ENCODE measurements at regions of chr1 and their contacts with region 1.

Region 1: DNA sequence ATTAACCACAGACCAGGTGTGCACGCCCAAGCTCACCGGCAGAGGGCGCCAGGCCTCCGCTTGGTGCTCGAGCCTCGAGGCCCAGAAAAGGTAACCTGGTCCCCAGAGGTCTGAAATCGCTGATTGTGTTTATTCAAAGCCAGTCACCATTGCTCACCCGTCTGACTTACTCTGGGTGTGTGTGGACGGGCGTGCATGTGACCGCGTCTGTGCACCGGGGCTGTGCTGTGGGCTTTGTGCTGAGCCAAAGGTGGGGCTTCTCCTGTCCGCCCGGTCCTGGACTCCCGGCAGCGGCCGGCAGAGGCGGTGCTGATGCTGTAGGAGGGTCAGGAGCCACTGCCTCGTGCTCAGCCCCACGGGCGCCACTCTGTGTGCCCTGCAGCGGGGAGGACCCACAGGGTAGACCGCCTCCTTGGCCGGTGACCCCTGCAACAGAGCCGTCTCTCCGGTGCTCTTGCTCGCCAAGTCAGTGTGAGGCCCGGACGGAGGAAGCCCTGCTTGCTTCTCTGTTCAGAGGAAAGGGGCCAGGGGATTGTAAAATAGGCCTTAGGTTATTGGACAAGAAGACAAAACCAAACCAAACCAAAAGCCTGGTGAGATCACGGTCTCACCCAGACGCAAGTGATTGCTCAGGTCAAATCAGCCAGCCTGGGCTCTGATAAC is 32.0 kb upstream of the BTG2 start:
- DNase-seq: peak; percentile 89 to 95 (median 94)
- ATAC-seq: peak; percentile 66 to 80
- H3K4me3 ChIP-seq: no peak overlapping the region
- H3K27ac ChIP-seq: peak overlapping the region; percentile 60
- H3K4me1 ChIP-seq: peaks cover 17% of the 10 kb centered on the region
- H3K27me3 ChIP-seq: no peaks in the 10 kb centered on the region

Region 2: GRCh38 chr1:202926720-202927491 is 346.4 kb before region 1 on chr1 and contains the start of gene KLHL12:
- intact Hi-C with region 1: no loop called
- DNase-seq: peak; percentile 97 to 99 (median 99)
- ATAC-seq: peak; percentile 99
- H3K4me3 ChIP-seq: peak within 1 kb of the TSS; percentile 88
- H3K27ac ChIP-seq: peak within 1 kb of the TSS; percentile 96
- H3K4me1 ChIP-seq: no peaks in the 10 kb centered on the region
- H3K27me3 ChIP-seq: no peaks in the 10 kb centered on the region
- total RNA-seq, gene KLHL12: 16.8 to 21.4 (median 20.1) TPM

Region 3: DNA sequence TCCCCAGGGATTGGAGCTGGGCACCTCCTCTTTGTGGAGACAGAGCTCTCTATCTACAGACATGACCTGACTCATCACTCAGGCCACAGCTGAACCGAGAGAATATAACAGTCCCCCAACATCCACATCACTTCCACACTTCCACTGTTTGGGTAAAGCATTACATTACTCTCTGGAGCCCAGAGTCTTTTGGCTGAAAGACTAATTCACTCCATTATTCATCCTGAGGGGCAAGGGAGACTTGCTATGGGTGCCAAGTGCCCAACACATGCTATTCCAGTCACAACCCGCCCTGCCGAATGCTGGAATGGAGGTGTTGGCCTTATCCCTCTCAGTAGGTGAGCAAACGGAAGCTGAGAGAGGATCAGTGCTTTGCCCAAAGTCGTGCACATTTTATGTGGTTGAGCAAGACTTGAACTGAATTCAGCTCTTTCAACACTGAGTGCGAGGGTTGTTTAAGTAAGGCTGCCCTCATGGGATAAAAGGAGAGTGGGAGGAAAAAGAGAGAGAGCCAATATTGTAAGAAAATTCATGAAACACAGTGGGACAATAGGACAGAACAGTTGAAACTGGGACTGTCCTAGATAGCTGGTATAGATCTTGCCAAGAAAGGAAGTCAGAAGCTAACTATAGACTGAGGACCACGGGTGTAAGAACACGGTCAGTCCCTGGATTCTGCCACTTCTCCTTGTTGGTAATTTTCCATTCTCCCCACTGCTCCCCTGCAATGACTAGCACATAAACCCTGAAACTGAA is 73.3 kb before region 1 on chr1:
- intact Hi-C with region 1: no loop called
- DNase-seq: peak in 2 of 3 donors; percentile 51 to 69
- ATAC-seq: peak; percentile 73 to 74
- H3K4me3 ChIP-seq: no peak overlapping the region
- H3K27ac ChIP-seq: peak overlapping the region; percentile 63
- H3K4me1 ChIP-seq: peaks cover 11% of the 10 kb centered on the region
- H3K27me3 ChIP-seq: no peaks in the 10 kb centered on the region

Region 4: DNA sequence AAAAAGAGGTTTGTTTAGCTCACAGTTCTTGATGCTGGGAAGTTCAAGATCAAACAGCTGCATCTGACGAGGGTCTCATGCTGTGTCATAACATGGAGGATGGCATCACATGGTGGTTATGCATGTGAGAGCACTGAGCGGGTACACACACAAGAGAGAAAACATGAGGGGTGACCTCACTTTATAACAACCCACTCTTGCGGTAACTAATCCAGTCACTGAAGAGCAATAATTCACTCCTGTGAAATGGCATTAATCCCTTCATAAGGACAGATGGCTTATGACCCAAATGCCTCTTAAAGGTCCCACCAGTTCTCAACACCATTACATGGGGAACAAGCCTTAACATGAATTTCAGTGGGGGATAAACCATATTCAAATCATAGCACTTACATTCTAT is 20.7 kb before region 1 on chr1:
- intact Hi-C with region 1: no loop called
- DNase-seq: no peak
- ATAC-seq: no peak
- H3K4me3 ChIP-seq: no peak overlapping the region
- H3K27ac ChIP-seq: no peak overlapping the region
- H3K4me1 ChIP-seq: no peaks in the 10 kb centered on the region
- H3K27me3 ChIP-seq: no peaks in the 10 kb centered on the region

Region 5: GRCh38 chr1:203304919-203305808 is 31.8 kb after region 1 on chr1 and contains the start of gene BTG2:
- intact Hi-C with region 1: loop called in 3 of 4 experiments (anchors 2 to 5 kb)
- DNase-seq: peak; percentile 96 to 98 (median 98)
- ATAC-seq: peak; percentile 91 to 93
- H3K4me3 ChIP-seq: peak within 1 kb of the TSS; percentile 87
- H3K27ac ChIP-seq: peak within 1 kb of the TSS; percentile 97
- H3K4me1 ChIP-seq: peaks cover 6% of the 10 kb centered on the region
- H3K27me3 ChIP-seq: no peaks in the 10 kb centered on the region
- total RNA-seq, gene BTG2: 68.1 to 361 (median 105) TPM

Region 6: GRCh38 chr1:203340112-203340804 is 66.9 kb after region 1 on chr1:
- intact Hi-C with region 1: loop called (anchors 1 to 5 kb)
- DNase-seq: peak; percentile 62 to 87 (median 80)
- ATAC-seq: peak; percentile 79 to 82
- H3K4me3 ChIP-seq: no peak overlapping the region
- H3K27ac ChIP-seq: no peak overlapping the region
- H3K4me1 ChIP-seq: no peaks in the 10 kb centered on the region
- H3K27me3 ChIP-seq: no peaks in the 10 kb centered on the region

Region 7: GRCh38 chr1:203480525-203481084 is 207.3 kb after region 1 on chr1:
- intact Hi-C with region 1: loop called (anchors 5 to 10 kb)
- DNase-seq: peak; percentile 58 to 84 (median 82)
- ATAC-seq: peak; percentile 67 to 85
- H3K4me3 ChIP-seq: peak overlapping the region; percentile 12
- H3K27ac ChIP-seq: peak overlapping the region; percentile 14
- H3K4me1 ChIP-seq: peaks cover 2% of the 10 kb centered on the region
- H3K27me3 ChIP-seq: no peaks in the 10 kb centered on the region

Region 8: DNA sequence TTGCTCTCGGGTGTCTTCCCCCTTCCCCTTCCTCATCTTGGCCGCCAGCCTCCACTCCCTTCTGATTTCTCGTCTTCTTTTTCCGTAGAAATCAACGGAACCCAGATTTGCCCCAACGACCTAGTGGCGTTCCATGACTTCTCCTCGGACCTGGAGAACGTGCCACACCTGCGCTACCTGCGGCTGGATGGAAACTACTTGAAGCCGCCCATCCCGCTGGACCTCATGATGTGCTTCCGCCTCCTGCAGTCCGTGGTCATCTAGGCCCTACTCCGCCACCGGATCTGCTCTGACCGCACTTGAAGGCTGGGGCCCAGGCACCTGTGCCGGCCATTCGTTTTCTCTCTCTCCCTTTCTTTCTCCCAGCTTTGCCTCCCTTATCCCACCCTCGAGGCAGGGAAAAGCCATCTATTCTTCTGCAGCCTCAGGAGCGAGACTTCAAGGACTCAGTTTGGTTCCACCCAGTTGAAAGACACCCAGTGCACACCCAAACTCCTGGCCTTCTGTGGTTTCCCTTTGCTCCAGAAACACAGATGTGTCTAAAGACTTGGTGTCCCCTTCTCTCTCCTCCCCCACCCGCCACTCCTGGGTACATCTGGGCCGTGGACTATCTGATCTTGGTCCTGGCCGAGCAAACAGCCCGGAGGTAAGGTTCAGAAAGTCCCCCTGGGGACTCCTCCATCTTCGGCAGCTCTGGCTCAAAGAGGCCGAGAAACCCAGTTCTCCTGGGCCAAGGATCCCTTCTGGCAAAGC is 213.5 kb after region 1 on chr1:
- intact Hi-C with region 1: loop called (anchors 5 to 10 kb)
- DNase-seq: peak in 2 of 3 donors; percentile 57 to 70
- ATAC-seq: no peak
- H3K4me3 ChIP-seq: no peak overlapping the region
- H3K27ac ChIP-seq: peak overlapping the region; percentile 66
- H3K4me1 ChIP-seq: no peaks in the 10 kb centered on the region
- H3K27me3 ChIP-seq: no peaks in the 10 kb centered on the region